Mammary epithelial cell (primary cell): ENCODE measurements at regions of chr11 and their contacts with region 1.

Region 1: GRCh38 chr11:73376160-73376802 is at the start of gene RELT:
- DNase-seq: peak; percentile 90
- H3K4me3 ChIP-seq: peak within 1 kb of the TSS; percentile 57 to 99 (median 86)
- H3K27ac ChIP-seq: peak within 1 kb of the TSS; percentile 75
- H3K4me1 ChIP-seq: peaks cover 8% of the 10 kb centered on the region
- H3K27me3 ChIP-seq: no peaks in the 10 kb centered on the region
- CTCF ChIP-seq: peak; percentile 74 to 82
- total RNA-seq, gene RELT: 4.5 to 10.2 TPM

Region 2: DNA sequence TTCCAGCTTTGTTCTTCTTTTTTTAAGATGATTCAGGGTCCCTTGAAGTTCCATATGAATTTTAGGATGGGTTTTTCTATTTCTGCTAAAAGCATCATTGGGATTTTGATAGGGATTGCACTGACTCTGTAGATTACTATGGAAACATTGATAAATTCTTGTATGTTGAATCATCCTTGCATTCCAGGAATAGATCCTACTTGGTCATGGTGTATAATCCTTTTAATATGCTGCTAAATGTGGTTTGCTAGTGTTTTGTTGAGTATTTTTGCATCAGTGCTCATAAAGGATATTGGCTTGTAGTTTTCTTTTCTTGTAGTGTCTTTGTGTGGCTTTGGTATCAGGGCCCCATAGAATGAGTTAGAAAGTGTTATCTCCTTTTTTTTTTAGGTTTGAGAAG is 1097.4 kb before region 1 on chr11:
- CTCF ChIA-PET with region 1: no interaction called
- dilution Hi-C with region 1: no loop called
- in situ Hi-C with region 1: no loop called
- intact Hi-C with region 1: no loop called
- DNase-seq: peak; percentile 14
- H3K4me3 ChIP-seq: no peak overlapping the region
- H3K27ac ChIP-seq: no peak overlapping the region
- H3K4me1 ChIP-seq: no peaks in the 10 kb centered on the region
- H3K27me3 ChIP-seq: no peaks in the 10 kb centered on the region
- CTCF ChIP-seq: no peak

Region 3: GRCh38 chr11:73350908-73351636 is 25.2 kb before region 1 on chr11:
- CTCF ChIA-PET with region 1: interaction called, 3 read pairs
- dilution Hi-C with region 1: no loop called
- in situ Hi-C with region 1: no loop called
- intact Hi-C with region 1: loop called (anchors 1 kb)
- DNase-seq: peak; percentile 55
- H3K4me3 ChIP-seq: no peak overlapping the region
- H3K27ac ChIP-seq: no peak overlapping the region
- H3K4me1 ChIP-seq: peaks cover 7% of the 10 kb centered on the region
- H3K27me3 ChIP-seq: no peaks in the 10 kb centered on the region
- CTCF ChIP-seq: peak; percentile 97 to 99